AG04450 (cell line): ENCODE measurements at regions of chr7 and their contacts with region 1.

Region 1: DNA sequence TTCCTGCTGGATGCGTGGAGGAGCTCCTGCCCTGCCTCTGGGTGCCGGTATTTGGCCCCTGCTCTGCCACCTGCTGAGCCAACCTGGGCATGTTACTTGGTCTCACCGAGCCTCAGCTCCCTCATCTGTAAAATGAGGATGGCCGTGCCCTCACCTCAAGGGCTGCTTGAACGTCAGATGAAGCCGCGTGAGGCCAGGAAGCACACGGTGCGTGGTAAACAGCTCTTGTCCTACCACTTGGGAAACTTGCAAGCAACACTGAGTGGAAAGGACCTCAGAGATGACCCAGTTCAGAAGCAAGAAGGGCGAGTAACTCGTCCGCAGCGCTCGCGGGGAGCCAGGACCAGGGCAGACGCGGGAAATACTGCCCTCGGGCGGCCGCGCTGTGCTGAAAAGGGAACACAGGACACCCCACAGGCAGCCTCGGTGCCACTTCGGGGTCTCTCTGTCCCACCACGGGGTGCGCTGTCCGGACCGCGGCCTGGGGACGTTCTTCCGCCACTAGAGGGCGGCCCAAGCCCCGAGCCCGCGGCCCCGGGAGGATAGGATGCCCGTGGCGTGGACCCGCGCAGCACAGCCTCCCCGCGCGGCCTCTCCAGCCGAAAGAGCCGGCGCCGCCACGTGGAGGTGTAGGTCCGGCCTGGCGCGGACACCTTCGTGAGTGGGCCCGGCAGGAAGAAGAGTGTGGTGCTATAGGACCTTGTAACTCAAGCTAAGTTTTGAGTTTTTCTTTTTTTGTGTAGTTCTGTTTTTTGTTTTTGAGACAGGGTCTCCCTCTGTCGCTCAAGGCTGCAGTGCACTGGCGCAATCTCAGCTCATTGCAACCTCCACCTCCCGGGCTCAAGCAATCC is 94.1 kb downstream of the PRKAG2 start:
- DNase-seq: peak; percentile 11
- H3K4me3 ChIP-seq: peak overlapping the region; percentile 45
- H3K27ac ChIP-seq: no peak overlapping the region
- H3K27me3 ChIP-seq: peaks cover 40% of the 10 kb centered on the region
- CTCF ChIP-seq: peak; percentile 85

Region 2: DNA sequence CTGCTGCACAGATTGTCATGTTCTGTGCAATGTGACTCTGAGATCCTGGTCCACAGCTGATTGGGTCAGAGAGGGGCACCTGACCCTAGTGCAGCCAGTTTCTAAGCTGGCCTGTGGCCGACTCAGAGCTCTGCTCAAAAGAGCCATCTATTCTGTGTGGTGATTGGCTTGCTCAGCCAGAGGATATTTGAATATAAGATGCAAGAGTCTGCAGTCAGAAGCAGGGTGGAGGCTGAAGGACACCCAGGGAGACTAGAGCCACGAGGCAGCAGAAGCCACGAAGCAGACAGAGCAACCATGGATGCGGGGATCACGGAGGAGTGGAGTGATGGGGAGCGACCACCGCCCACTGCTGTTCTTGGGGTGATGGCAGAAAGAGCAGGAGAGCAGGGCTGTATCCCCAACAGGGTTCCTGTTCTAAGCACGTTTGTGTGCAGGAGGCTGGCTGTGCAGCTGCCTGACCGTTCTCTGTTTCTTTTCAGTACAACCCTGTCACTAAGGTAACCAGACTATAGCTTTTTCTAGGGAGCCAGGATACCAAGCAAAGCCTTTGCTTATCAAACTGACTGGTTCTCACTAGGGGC is 243.6 kb before region 1 on chr7:
- CTCF ChIA-PET with region 1: interaction called, 10 read pairs
- POLR2A ChIA-PET with region 1: no interaction called
- DNase-seq: no peak
- H3K4me3 ChIP-seq: no peak overlapping the region
- H3K27ac ChIP-seq: no peak overlapping the region
- H3K27me3 ChIP-seq: peaks cover 6% of the 10 kb centered on the region
- CTCF ChIP-seq: no peak

Region 3: DNA sequence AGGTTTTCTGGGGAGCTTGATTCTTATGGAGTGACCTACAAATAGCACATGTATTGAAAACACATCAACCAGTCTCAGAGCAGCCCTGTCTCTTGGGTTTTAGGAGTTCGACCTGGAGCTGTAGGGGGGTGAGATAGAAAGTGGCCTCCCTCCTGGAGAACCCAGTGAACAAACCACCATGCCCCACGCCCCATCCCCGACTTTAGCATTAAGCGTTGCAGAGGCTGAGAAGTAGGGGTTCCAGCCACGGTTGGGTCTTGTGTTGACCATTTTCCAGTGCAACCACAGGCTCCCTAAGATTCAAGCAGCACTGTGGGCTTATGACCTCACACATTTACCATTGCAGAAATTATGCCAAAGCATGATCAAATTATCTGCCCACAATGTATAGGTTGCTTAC is 12.1 kb before region 1 on chr7:
- CTCF ChIA-PET with region 1: interaction called, 14 read pairs
- POLR2A ChIA-PET with region 1: no interaction called
- DNase-seq: no peak
- H3K4me3 ChIP-seq: no peak overlapping the region
- H3K27ac ChIP-seq: no peak overlapping the region
- H3K27me3 ChIP-seq: peaks cover 63% of the 10 kb centered on the region
- CTCF ChIP-seq: no peak

Region 4: DNA sequence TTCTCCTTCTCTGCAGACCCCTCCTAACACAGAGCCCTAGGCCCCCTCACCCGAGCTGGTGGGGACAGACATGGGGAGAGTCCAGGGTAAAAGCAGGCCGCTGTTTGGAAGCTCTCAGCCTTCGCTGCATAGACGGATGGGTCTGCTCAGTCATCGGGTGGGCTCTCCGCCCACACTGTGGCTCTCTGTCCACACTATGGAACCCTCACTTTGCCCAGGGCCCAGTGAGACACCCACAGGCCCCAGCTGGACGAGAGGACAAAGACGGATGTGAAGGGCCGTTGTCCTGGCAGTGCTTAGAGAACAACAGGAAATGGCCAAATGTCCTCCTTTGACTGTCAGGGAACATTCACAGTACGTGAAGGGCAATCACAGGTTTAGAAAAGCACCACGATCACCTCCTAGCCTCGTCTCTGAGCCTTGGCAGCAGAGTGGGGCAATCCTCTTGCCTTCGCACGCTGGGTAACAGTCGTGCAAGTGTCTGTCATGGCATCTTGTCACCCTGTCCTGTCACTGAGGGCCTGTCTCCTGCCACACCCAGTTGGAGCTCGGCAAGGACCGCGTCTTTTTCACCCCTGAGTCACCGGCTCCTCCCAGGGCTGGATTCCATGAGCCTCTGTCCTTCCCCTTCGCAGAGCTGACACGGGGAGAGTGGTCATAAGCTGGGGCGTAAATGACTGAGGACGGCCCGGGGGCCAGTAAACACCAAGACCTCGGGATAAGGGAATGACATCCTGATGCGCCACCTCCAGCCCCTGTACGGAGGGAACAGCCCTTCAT is 13.5 kb after region 1 on chr7:
- CTCF ChIA-PET with region 1: interaction called, 31 read pairs
- POLR2A ChIA-PET with region 1: no interaction called
- DNase-seq: no peak
- H3K4me3 ChIP-seq: no peak overlapping the region
- H3K27ac ChIP-seq: no peak overlapping the region
- H3K27me3 ChIP-seq: peaks cover 4% of the 10 kb centered on the region
- CTCF ChIP-seq: no peak

Region 5: GRCh38 chr7:151936207-151936606 is 153.4 kb after region 1 on chr7:
- CTCF ChIA-PET with region 1: interaction called, 15 read pairs
- POLR2A ChIA-PET with region 1: no interaction called
- DNase-seq: no peak
- H3K4me3 ChIP-seq: no peak overlapping the region
- H3K27ac ChIP-seq: no peak overlapping the region
- H3K27me3 ChIP-seq: peaks cover 6% of the 10 kb centered on the region
- CTCF ChIP-seq: no peak